Esophagus squamous epithelium (tissue), 5 donors: ENCODE measurements at regions of chr15 and their contacts with region 1.

Region 1: DNA sequence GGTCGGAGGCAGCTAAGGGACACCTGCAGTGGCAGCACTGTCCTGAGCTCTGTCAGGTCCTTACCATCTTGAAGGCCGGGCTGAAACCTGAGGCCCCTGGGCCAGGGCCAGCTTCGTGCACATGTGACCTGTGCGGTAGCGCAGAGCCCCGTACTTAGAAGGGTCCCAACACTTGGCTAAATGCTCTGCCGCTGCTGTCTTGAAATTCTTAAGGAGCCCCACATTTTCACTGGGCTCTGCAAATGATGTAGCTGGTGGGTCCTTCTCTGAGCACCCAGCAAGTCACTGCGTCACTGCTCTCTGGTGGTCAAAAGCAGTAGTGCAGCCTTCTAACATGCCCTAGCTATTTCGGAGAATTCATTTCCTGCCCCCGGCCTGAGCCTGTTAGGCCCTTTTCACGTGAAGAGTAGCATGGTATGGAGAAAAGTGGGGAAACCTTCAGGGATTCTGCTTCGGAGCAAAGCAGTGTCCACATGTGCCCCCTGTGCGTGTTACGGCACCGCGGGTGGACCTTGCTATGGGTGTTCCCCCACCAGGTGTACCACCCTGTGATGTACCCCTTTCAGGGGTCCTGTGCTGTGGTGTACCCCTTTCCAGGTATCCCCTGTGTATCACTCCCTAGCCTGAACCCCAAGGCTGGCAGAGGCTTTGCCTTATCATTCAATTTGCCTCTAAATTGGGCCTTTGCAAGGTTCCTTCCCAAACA is 79.7 kb downstream of the TMEM266 start:
- DNase-seq: no peak
- H3K4me3 ChIP-seq: peak overlapping the region in 1 of 4 donors; percentile 16
- H3K27ac ChIP-seq: peak overlapping the region in 1 of 4 donors; percentile 20
- H3K4me1 ChIP-seq: peaks cover 8 to 23% (median 16%) of the 10 kb centered on the region in 3 donors
- H3K27me3 ChIP-seq: peaks cover 0 to 6% (median 0%) of the 10 kb centered on the region in 4 donors
- CTCF ChIP-seq: peak; percentile 82 to 95 (median 92)
- POLR2A ChIP-seq: no peak

Region 2: DNA sequence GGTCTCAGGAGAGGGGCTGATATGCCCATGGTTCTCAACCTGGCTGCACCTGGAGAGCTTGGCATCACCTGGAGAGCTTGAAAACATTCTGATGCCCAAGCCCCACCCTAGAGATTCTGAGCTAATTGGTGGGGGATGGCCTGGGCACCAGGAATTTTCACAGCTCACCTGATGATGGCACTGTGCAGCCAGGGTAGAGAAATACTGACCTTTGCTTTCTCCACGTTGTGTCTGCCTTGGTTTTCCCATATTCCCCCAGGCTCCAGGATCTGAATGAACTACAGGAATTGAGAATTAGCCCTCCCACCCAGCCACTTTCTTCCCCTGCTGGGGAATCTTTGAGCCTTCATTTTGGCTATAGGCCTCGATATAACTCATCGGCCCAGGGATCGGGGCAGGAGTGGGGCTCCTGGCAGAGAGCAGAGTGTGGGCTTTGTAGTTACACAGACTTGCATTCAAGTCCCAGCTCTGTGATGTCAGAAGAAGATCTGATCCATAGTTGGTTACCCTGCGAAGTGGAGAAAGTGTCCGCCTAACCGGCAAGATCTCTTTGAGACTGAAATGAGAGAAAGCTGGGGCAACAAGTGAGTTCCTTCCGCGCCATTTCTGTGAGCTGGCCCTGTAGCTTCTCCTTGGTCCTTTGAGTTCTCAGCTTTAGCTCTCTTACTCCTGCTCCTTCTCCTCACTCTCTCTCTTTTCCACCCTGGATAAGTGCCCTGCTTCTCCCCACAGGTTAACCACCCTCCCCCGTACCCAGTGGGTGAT is 329.4 kb before region 1 on chr15:
- intact Hi-C with region 1: loop called (anchors 10 kb)
- DNase-seq: no peak
- H3K4me3 ChIP-seq: no peak overlapping the region
- H3K27ac ChIP-seq: no peak overlapping the region
- H3K4me1 ChIP-seq: no peaks in the 10 kb centered on the region
- H3K27me3 ChIP-seq: peaks cover 0 to 13% (median 0%) of the 10 kb centered on the region in 4 donors
- CTCF ChIP-seq: peak; percentile 20 to 66 (median 40)
- POLR2A ChIP-seq: no peak

Region 3: DNA sequence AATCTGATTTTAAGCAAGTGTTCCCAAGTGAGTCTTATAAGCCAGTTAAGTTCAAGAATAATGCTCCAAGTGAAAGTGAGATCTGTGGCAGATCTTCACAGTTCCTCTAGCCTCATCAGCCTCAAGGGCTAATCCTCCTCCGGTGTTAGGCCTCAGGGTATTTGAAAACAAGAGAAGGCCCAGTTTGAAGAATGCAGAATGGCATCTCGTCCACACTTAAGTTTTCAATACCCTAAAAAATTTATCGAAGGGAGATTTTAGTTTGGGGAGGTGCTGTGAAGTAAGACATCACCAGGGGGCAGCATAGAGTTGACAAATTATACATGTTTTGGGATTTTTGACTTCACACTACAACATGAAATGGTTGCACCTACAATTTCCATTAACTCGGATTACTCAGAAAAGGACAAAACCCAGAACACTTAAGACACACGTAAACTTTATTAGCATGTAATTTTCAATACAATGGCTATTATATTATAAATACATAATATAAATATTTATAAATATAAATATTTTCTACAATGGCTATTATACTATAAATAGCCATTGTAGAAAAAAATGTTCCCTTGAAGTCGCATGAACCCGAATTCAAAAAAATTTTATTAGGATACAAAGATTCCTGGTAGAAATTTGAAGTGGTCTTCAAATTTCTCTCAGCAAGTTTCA is 82.1 kb before region 1 on chr15:
- intact Hi-C with region 1: loop called (anchors 5 kb)
- DNase-seq: no peak
- H3K4me3 ChIP-seq: peak overlapping the region in 1 of 4 donors; percentile 52
- H3K27ac ChIP-seq: no peak overlapping the region
- H3K4me1 ChIP-seq: peaks cover 12 to 30% (median 18%) of the 10 kb centered on the region in 3 donors
- H3K27me3 ChIP-seq: peaks cover 0 to 62% (median 0%) of the 10 kb centered on the region in 4 donors
- CTCF ChIP-seq: peak; percentile 45 to 75 (median 64)
- POLR2A ChIP-seq: no peak